ENCODE measurements at regions of chrX and their contacts with region 1.

Region 1: GRCh38 chrX:65534450-65535292 is at the start of gene LAS1L:
- DNase-seq: peak; percentile 77
- ATAC-seq: peak; percentile 99
- H3K4me3 Mint-ChIP-seq: peak within 1 kb of the TSS; percentile 100
- H3K27ac Mint-ChIP-seq: peak within 1 kb of the TSS; percentile 98
- H3K4me1 Mint-ChIP-seq: peaks cover 23% of the 10 kb centered on the region
- H3K27me3 Mint-ChIP-seq: no peaks in the 10 kb centered on the region
- CTCF ChIP-seq: no peak
- total RNA-seq, gene LAS1L: 51.9 and 54.0 TPM in 2 replicates

Region 2: GRCh38 chrX:64205735-64206491 is 1328.8 kb before region 1 on chrX:
- CTCF ChIA-PET with region 1: no interaction called
- POLR2A ChIA-PET with region 1: interaction called, 3 read pairs
- intact Hi-C with region 1: loop called (anchors 2 kb)
- DNase-seq: peak; percentile 75
- ATAC-seq: peak; percentile 88
- H3K4me3 Mint-ChIP-seq: peak overlapping the region; percentile 92
- H3K27ac Mint-ChIP-seq: peak overlapping the region; percentile 95
- H3K4me1 Mint-ChIP-seq: peaks cover 18% of the 10 kb centered on the region
- H3K27me3 Mint-ChIP-seq: no peaks in the 10 kb centered on the region
- CTCF ChIP-seq: no peak

Measured in activated B cell treated with CpG ODN at 0.5 μM for 24 hours (primary cell).